Ascending aorta (tissue), 2 donors: ENCODE measurements at regions of chr13 and their contacts with region 1.

Region 1: GRCh38 chr13:77480066-77480465 is 55.4 kb upstream of the SCEL start:
- DNase-seq: no peak
- H3K4me3 ChIP-seq: no peak overlapping the region
- H3K27ac ChIP-seq: no peak overlapping the region
- H3K4me1 ChIP-seq: peaks cover 0 to 6% of the 10 kb centered on the region in 2 donors
- H3K27me3 ChIP-seq: no peaks in the 10 kb centered on the region
- CTCF ChIP-seq: no peak

Region 2: DNA sequence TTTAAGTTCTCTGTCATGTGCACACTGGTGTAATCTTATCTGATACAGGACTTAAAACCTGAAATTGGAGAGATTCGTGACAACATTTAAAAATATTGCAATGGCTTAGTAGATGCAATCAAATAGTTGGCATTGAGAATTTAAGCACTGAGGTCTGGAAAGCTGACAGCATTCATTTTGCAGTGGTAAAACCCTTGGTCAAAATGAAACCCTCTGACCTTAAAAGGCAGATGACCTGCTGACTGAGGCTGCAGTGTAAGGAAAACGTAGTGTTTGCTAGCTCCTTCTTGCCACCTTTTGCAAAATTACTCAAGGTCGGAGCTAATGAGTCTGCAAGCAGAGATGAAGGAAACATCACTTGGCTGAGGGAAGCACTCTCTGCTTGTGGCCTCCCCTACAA is 744.4 kb before region 1 on chr13:
- intact Hi-C with region 1: no loop called
- DNase-seq: no peak
- H3K4me3 ChIP-seq: no peak overlapping the region
- H3K27ac ChIP-seq: no peak overlapping the region
- H3K4me1 ChIP-seq: no peaks in the 10 kb centered on the region
- H3K27me3 ChIP-seq: no peaks in the 10 kb centered on the region
- CTCF ChIP-seq: no peak

Region 3: DNA sequence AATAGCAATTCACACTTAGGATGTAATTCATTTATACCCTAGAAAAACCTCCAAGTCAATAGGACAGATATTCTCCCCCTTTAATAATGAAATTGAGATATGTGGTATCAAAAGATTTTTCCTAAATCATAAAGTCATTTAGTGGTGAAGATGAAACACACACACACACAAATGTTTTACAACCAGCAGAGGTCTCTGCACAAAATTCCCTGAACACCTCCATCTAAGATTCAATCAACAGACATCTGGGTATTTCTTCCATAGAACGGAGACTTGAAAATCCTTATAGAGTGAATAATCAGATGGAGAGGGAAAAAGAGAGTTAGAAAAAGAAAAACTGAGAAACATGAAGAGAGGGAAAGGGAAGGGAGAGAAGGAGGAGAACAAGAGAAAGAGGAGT is 205.9 kb before region 1 on chr13:
- intact Hi-C with region 1: loop called (anchors 5 kb)
- DNase-seq: no peak
- H3K4me3 ChIP-seq: no peak overlapping the region
- H3K27ac ChIP-seq: no peak overlapping the region
- H3K4me1 ChIP-seq: no peaks in the 10 kb centered on the region
- H3K27me3 ChIP-seq: no peaks in the 10 kb centered on the region
- CTCF ChIP-seq: peak in 1 of 3 experiments; percentile 17

Region 4: GRCh38 chr13:77460195-77460594 is 19.9 kb before region 1 on chr13:
- intact Hi-C with region 1: no loop called
- DNase-seq: peak in 1 of 2 donors; percentile 77
- H3K4me3 ChIP-seq: no peak overlapping the region
- H3K27ac ChIP-seq: no peak overlapping the region
- H3K4me1 ChIP-seq: no peaks in the 10 kb centered on the region
- H3K27me3 ChIP-seq: no peaks in the 10 kb centered on the region
- CTCF ChIP-seq: no peak

Region 5: DNA sequence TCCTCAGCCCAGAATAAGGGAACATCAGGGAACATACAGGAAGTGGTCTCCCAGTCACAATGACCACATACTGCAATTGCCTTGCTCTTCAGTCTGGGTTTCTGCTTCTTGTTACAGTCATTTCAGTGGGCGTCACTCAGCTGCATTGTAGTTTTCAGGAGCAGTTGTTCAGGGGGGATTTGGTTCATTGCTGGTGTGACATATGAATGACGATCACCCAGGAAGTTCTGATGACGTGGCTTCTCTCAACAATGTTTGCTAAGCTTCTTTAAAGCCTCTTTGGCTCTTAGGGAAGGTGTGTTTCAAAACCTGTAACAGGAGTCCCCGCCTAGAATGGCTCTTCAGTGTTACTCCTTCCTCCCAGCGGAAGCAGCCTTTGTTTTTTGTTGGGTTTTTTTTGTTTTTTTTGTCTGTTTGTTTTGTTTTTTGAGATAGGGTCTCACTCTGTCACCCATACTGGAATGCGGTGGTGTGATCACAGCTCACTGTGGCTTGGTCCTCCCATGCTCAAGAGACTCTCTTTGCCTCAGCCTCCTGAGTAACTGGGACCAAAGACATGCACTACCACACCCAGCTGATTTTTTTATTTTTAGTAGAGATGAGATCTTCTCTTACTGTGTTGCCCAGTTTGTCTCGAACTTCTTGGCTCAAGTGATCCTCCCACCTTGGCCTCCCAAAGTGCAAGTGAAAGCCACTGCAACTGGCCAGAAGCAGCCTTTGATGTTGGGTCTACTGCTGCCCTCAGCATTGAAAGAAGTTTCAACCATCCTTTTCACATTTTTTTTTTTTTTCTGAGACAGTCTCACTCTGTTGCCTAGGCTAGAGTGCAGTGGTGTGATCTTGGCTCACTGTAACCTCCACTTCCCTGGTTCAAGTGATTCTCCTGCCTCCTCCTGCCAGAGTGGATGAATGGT is 54.1 kb after region 1 on chr13:
- intact Hi-C with region 1: no loop called
- DNase-seq: no peak
- H3K4me3 ChIP-seq: no peak overlapping the region
- H3K27ac ChIP-seq: no peak overlapping the region
- H3K4me1 ChIP-seq: no peaks in the 10 kb centered on the region
- H3K27me3 ChIP-seq: no peaks in the 10 kb centered on the region
- CTCF ChIP-seq: no peak